ENCODE measurements at regions of chr1 and their contacts with region 1.

Region 1: DNA sequence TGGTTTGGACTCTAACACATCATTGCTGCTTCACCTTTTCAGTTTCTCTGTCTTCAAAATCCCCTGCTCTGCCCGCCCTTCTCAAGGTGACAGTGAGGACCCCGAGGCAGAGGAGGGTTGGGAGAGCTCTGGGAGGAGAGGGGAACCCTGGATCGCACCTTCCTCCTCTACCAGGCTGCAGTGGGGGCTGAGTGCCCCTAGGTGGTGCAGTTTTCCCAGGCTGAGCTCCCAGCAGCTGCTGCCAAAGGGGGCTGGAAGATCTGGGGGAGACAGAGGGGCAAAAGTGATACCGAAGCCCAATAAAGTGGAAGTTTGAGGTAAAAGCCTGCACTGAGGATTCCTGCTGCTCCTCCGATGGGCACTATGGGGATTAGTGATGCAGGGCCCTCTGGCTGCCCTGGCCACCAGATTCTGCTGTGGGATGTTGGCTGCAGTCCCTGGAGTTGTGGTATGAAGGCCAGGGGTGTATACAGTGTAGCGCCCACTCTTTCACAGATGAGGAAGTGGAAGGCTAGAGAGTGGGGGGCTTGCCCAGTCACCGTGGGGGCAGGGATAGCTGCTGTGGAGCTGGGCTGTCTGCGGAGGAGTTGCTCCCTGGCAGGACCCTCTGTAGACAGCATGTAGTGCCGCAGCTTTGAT is 40.7 kb upstream of the SCMH1 start:
- DNase-seq: no peak
- H3K4me3 ChIP-seq: no peak overlapping the region
- H3K27ac ChIP-seq: no peak overlapping the region
- H3K4me1 ChIP-seq: no peaks in the 10 kb centered on the region
- H3K27me3 ChIP-seq: no peaks in the 10 kb centered on the region
- CTCF ChIP-seq: peak; percentile 3 to 70 (median 65)
- POLR2A ChIP-seq: no peak

Region 2: DNA sequence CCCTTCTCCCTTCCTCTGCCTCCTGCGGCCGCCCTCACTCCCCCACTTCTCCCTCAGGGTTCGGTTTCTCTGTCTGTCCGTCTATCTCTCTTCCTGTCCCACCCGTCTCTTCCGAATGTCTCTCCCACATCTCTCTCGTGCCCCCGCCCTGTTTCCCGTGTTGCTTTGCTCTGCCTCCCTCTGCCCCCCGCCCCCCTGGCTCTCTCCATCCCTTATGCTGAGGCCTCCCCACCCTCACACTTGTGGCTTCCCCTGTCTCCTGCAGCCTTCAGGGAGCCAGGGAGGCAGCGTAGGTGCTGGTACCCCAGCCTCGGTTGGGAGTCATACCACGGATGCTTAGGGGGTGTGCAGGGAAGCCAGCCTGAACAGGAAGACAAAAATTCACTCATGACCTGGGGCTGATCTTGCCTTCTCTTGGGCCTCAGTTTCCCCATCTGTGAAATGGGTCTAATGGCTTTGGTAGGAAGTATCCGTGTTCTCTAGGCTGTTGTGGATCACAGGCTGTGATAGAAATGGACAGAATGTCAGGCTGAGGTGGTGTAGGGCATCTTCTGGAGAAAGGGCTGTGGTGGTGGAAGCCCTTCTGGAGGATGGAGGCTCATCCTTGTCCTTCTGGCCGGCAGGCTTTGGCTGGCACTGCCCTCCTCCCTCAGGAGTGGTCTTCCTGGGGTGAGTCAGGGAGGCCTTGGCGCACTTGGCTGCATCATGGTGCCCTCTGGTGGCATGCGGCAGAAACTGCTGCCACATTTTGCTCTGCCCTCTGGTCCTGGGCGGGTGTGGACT is 133.9 kb after region 1 on chr1:
- intact Hi-C with region 1: loop called (anchors 10 kb)
- DNase-seq: peak in 1 of 2 donors; percentile 43
- H3K4me3 ChIP-seq: no peak overlapping the region
- H3K27ac ChIP-seq: no peak overlapping the region
- H3K4me1 ChIP-seq: peaks cover 0 to 3% of the 10 kb centered on the region in 2 donors
- H3K27me3 ChIP-seq: no peaks in the 10 kb centered on the region
- CTCF ChIP-seq: peak; percentile 72 to 95 (median 90)
- POLR2A ChIP-seq: no peak

Measured in breast epithelium (tissue), 4 donors.